Naive thymus-derived CD8-positive, alpha-beta T cell (primary cell): ENCODE measurements at regions of chr14 and their contacts with region 1.

Region 1: DNA sequence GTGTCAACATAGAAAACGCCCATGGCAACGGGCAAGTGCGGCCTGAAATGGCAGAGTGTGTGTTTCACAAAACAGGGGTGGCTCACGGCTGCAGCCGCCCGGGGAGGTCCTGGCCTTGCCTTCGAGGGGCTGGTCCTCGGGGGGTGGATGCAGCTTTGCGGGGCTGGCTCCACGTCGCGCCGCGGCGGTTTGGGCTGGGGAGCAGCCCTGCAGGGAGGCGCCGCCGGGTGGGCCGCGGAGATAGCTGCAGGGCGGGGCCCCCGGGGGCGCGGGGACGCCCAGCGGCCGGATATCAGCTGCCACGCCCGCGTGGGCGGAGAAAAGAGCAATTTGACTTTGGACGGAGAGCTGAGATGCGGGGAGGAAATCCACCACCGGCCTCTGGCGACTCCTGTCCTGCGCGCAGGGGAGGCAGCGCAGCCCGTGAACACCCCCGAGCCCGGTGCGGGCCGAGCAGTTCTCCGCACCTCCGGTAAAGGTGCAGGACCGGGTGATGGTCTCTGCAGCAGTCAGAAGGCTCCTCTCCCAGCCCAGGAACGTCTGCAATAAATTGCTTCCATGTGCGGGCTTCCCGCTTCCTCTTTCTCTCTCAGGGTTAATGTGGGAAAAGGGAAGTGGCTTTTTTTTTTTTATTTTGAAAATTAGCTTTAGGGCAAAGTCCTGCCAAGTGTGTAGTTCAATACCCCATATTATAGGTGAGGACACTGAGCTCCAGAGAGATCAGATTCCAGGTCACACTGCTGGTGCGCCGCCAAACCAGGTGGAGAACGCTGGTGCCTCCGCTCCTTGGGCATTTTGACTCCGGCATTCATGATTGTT is 110.5 kb downstream of the ARF6 start:
- DNase-seq: peak; percentile 66 to 91 (median 76)
- ATAC-seq: peak; percentile 46 to 53
- H3K4me3 Mint-ChIP-seq: peak overlapping the region; percentile 77 to 94 (median 90)
- H3K27ac Mint-ChIP-seq: peak overlapping the region; percentile 96 to 99 (median 98)
- H3K4me1 Mint-ChIP-seq: peaks cover 34 to 62% (median 51%) of the 10 kb centered on the region in 4 donors
- H3K27me3 Mint-ChIP-seq: no peaks in the 10 kb centered on the region

Region 2: DNA sequence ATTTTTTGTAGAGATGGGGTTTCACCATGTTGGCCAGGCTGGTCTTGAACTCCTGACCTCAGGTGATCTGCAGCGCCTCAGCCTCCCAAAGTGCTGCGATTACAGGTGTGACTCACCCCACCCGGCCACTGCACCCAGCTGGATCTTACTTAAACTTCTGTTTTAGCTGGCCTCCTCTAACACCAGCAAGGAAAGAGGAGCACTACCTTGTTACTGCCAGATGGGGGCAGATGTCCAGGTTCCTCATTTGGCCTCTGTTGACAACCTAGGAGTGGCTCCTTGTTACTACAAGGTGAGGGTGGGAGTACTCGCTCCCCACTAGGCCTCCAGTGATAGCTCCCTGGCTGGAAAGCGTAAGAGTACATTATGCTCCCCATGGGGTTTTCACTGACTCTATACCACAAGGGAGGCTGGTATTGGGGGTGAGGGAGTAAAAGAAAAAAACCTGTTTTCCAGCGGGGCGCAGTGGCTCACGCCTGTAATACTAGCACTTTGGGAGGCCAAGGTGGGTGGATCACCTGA is 123.7 kb before region 1 on chr14:
- POLR2A ChIA-PET with region 1: interaction called, 10 read pairs
- DNase-seq: peak in 8 of 10 donors; percentile 18 to 77 (median 50)
- ATAC-seq: peak; percentile 87 to 94
- H3K4me3 Mint-ChIP-seq: no peak overlapping the region
- H3K27ac Mint-ChIP-seq: peak overlapping the region in 7 of 10 donors; percentile 35 to 81 (median 51)
- H3K4me1 Mint-ChIP-seq: peaks cover 0 to 18% (median 13%) of the 10 kb centered on the region in 4 donors
- H3K27me3 Mint-ChIP-seq: no peaks in the 10 kb centered on the region

Region 3: GRCh38 chr14:49920935-49921334 is 82.5 kb before region 1 on chr14:
- POLR2A ChIA-PET with region 1: no interaction called
- DNase-seq: no peak
- ATAC-seq: no peak
- H3K4me3 Mint-ChIP-seq: no peak overlapping the region
- H3K27ac Mint-ChIP-seq: peak overlapping the region in 1 of 10 donors; percentile 3
- H3K4me1 Mint-ChIP-seq: peaks cover 7 to 31% (median 11%) of the 10 kb centered on the region in 4 donors
- H3K27me3 Mint-ChIP-seq: no peaks in the 10 kb centered on the region

Region 4: GRCh38 chr14:49940808-49941421 is 62.5 kb before region 1 on chr14:
- POLR2A ChIA-PET with region 1: interaction called, 11 read pairs
- DNase-seq: peak in 3 of 10 donors; percentile 37 to 53 (median 50)
- ATAC-seq: peak; percentile 74
- H3K4me3 Mint-ChIP-seq: peak overlapping the region in 9 of 10 donors; percentile 29 to 68 (median 58)
- H3K27ac Mint-ChIP-seq: peak overlapping the region in 9 of 10 donors; percentile 18 to 88 (median 71)
- H3K4me1 Mint-ChIP-seq: peaks cover 27 to 61% (median 58%) of the 10 kb centered on the region in 4 donors
- H3K27me3 Mint-ChIP-seq: no peaks in the 10 kb centered on the region

Region 5: DNA sequence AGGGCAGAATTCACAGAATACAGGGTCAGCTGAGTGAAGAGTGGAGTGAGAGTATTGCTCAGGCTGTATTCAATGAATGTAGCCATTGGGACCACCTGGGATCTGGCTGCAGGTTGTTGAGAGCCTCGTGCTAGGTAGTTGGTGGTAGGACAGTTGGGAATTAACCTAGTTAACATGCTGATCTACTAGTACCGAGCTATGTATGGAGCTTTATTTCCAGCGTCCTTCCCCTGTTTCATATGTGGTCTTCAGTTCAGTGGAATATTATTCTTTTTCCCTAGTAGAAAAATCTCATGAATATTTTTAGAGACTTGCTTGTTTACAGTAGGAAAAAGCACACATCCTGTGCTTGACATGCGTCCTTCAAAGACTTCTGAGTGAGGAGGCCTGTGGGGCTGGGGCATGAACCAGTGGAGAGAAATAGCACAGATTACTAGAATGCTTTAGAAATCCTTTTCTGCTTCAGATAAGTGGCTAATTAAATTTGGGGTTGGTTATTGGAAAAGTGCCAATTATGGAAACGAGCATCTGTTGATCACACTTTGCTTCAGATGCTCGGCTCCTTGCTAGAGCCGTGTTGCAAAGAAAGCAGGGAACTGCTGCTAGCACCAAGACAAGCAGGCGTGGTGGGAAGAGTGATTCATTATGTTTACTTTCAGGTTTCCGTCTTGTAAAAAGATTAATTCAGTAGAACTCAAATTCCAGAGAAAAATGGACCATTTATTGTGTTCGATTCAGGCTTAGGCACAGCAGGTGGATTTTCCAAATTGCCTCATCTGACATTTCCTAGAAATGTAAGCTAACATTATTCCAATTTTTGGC is 56.9 kb before region 1 on chr14:
- POLR2A ChIA-PET with region 1: interaction called, 11 read pairs
- DNase-seq: peak in 6 of 10 donors; percentile 9 to 64 (median 26)
- ATAC-seq: peak; percentile 75 to 76
- H3K4me3 Mint-ChIP-seq: peak overlapping the region; percentile 6 to 82 (median 70)
- H3K27ac Mint-ChIP-seq: peak overlapping the region; percentile 87 to 99 (median 92)
- H3K4me1 Mint-ChIP-seq: peaks cover 42 to 77% (median 70%) of the 10 kb centered on the region in 4 donors
- H3K27me3 Mint-ChIP-seq: no peaks in the 10 kb centered on the region

Region 6: DNA sequence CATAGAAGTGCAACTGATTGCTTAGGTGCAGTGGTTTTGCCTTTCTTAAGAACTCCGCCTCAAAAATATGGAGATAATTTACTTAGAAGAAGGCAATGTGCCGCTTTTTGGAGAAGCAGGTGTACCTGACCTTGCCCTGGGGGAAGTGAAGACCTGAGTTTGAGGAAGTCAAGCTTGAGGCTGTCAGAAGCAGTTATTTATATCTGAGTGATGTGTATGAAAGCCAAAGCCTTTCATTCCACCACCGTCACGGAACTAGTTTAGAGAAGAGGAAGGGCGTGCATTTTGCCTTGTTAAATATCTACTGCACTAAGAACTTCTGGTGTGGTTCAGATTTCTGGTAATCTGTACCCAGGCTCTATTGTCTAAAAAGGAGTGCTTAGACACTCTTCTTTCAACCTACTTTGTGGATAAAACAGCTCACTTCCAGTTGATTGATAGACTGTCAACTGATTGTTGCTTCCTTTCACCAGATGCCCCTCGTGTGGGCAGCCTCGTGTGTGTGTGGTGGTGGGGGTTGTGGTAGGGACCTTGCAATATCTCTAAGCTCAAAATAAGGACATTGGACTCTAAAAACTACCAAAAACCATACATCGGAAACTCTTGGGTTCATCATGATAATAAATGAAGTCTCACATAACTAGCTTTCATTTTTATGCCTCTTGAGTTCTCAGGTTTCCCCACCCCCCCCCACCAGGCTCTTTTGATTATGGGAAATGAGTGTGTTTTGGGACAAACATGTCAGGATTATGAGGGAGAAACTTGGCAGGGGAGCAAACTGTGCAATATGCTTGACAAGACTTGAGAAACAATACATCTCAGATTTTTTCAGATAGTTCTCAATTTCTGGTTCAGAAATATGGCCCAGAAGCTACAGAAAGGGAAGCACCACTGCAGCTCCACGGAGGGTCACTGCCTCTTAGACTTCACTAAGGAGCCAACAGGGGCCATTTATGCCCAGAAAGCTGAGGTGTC is 32.0 kb before region 1 on chr14:
- POLR2A ChIA-PET with region 1: interaction called, 173 read pairs
- DNase-seq: peak; percentile 19 to 91 (median 68)
- ATAC-seq: peak; percentile 86 to 91
- H3K4me3 Mint-ChIP-seq: peak overlapping the region; percentile 68 to 90 (median 83)
- H3K27ac Mint-ChIP-seq: peak overlapping the region; percentile 93 to 98 (median 96)
- H3K4me1 Mint-ChIP-seq: peaks cover 37 to 74% (median 62%) of the 10 kb centered on the region in 4 donors
- H3K27me3 Mint-ChIP-seq: no peaks in the 10 kb centered on the region

Region 7: DNA sequence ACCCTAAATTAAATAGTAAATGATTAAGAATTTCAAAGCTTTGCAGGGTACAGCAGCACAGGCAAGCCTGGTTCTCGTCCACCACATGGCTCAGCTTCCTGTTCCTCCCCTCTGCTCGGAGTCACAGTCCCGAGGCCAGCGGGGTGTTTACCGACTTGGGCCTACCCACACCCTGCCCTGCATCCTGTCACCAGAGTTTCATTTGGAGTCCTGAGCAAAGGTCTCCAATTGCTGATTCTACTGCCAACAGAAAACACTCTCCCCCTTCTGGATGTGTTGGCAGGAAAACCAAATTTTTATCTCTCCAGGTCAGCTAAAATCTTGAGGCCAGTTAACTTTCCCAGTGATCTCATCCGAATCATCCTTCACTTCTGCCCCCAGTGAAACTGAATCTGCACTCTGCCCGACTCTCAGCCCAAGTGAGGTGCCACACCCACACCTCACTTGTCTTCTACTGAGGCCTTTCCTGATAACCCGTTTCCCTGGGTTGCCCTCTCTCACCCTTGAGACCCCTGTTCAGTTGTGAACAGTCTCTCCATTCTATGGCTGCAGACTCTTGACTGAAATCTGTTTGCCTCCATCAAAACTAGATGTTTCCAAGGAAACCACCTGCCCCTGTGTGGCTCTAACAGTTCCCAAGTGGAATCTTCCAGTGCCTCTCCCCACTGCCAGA is 41.8 kb after region 1 on chr14:
- POLR2A ChIA-PET with region 1: interaction called, 27 read pairs
- DNase-seq: peak in 9 of 10 donors; percentile 23 to 83 (median 62)
- ATAC-seq: peak; percentile 71 to 82
- H3K4me3 Mint-ChIP-seq: peak overlapping the region; percentile 6 to 87 (median 64)
- H3K27ac Mint-ChIP-seq: peak overlapping the region; percentile 85 to 98 (median 92)
- H3K4me1 Mint-ChIP-seq: peaks cover 49 to 76% (median 76%) of the 10 kb centered on the region in 4 donors
- H3K27me3 Mint-ChIP-seq: no peaks in the 10 kb centered on the region

Region 8: DNA sequence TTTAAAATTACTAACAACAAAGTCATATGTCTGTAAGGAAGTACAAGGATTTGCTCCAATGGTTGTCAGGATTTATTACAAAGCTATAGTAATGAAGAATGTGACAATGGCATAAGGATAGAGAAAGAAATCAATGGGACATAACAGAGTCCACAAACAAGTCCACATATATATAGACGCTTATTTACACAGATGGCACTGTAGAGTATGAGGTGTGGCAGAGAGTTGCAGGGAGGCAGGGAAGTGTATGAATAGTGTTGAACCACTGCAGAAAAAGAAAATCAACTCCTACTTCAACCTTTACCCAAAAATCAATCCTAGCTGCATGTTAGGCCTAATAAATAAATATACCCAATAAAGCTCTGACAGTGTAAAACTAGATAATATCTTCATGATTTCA is 206.7 kb after region 1 on chr14:
- POLR2A ChIA-PET with region 1: no interaction called
- DNase-seq: no peak
- ATAC-seq: no peak
- H3K4me3 Mint-ChIP-seq: no peak overlapping the region
- H3K27ac Mint-ChIP-seq: peak overlapping the region in 1 of 10 donors; percentile 15
- H3K4me1 Mint-ChIP-seq: peaks cover 10 to 29% (median 22%) of the 10 kb centered on the region in 4 donors
- H3K27me3 Mint-ChIP-seq: no peaks in the 10 kb centered on the region